Heart right ventricle (tissue), 16 donors: ENCODE measurements at regions of chr7 and their contacts with region 1.

Region 1: GRCh38 chr7:47301105-47301477 is 280.8 kb downstream of the TNS3 start:
- DNase-seq: no peak
- ATAC-seq: no peak
- H3K4me3 ChIP-seq: no peak overlapping the region
- H3K27ac ChIP-seq: peak overlapping the region in 1 of 10 donors; percentile 14
- H3K4me1 ChIP-seq: peaks cover 0 to 33% (median 17%) of the 10 kb centered on the region in 9 donors
- H3K27me3 ChIP-seq: no peaks in the 10 kb centered on the region
- CTCF ChIP-seq: no peak

Region 2: GRCh38 chr7:47379629-47380324 is 78.7 kb after region 1 on chr7:
- intact Hi-C with region 1: loop called in 1 of 10 experiments (anchors 5 kb)
- DNase-seq: peak; percentile 79 to 85
- ATAC-seq: peak; percentile 85 to 94 (median 92)
- H3K4me3 ChIP-seq: peak overlapping the region in 4 of 10 donors; percentile 5 to 24 (median 12)
- H3K27ac ChIP-seq: peak overlapping the region; percentile 53 to 90 (median 77)
- H3K4me1 ChIP-seq: peaks cover 5 to 40% (median 31%) of the 10 kb centered on the region in 9 donors
- H3K27me3 ChIP-seq: no peaks in the 10 kb centered on the region
- CTCF ChIP-seq: no peak